ENCODE measurements at regions of chr13 and their contacts with region 1.

Region 1: GRCh38 chr13:99501184-99501847 is at the start of gene TM9SF2:
- DNase-seq: peak; percentile 94 to 98 (median 96)
- ATAC-seq: peak; percentile 70
- H3K4me3 ChIP-seq: peak within 1 kb of the TSS; percentile 93
- H3K4me3 Mint-ChIP-seq: peak within 1 kb of the TSS; percentile 94 to 100 (median 97)
- H3K27ac ChIP-seq: peak within 1 kb of the TSS; percentile 94
- H3K27ac Mint-ChIP-seq: peak within 1 kb of the TSS; percentile 96 to 99 (median 98)
- H3K4me1 ChIP-seq: peaks cover 47 to 65% of the 10 kb centered on the region in 2 donors
- H3K4me1 Mint-ChIP-seq: peaks cover 57 to 93% (median 85%) of the 10 kb centered on the region in 7 donors
- H3K27me3 ChIP-seq: no peaks in the 10 kb centered on the region
- H3K27me3 Mint-ChIP-seq: peaks cover 0 to 4% (median 0%) of the 10 kb centered on the region in 5 donors
- total RNA-seq, gene TM9SF2: 38.0 to 76.3 (median 53.1) TPM

Region 2: DNA sequence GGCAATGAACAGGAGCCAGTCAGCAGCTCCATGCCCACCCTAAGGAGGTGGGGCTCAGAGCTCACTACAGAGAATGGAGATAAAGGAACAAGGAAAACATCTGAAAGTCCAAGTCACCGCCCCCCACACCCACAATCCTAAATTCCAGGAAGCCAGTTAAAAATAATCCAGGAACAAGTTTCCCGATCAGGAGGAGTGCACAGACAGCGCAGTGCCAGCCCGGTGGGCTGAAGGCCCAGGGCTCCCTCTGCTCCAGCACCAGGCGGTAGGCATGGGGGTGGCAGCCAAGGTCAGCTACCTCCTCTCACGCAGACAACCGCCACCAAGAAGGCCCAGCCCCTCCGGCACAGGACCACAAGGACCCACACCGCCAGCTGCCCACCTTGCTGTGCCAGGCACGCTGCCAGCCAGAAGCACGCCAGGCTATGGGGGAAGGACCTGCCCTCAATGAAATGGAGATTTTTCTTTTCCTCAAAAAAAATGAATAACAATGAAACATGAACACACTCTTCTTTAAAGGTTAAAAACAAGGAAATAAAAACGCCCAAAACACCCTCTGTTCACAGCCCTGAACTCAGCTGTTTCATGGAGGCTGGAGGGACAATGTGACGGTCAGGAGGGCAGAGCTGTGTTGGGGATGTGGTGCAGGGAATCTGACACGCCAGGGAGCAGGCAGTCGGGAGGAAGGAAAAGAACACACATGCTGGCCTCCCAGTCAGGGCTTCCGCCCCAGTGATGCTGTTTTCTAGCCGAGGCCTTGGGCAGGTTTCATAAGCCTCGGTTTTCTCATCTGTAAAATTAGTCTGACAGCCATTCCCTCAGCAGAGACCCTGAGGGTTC is 935.4 kb before region 1 on chr13:
- CTCF ChIA-PET with region 1: no interaction called
- POLR2A ChIA-PET with region 1: interaction called, 3 read pairs
- intact Hi-C with region 1: loop called in 1 of 2 experiments (anchors 2 kb)
- DNase-seq: no peak
- ATAC-seq: no peak
- H3K4me3 ChIP-seq: no peak overlapping the region
- H3K4me3 Mint-ChIP-seq: peak overlapping the region; percentile 77 to 99 (median 84)
- H3K27ac ChIP-seq: peak overlapping the region; percentile 69
- H3K27ac Mint-ChIP-seq: peak overlapping the region; percentile 84 to 97 (median 96)
- H3K4me1 ChIP-seq: peaks cover 50 to 87% of the 10 kb centered on the region in 2 donors
- H3K4me1 Mint-ChIP-seq: peaks cover 67 to 99% (median 93%) of the 10 kb centered on the region in 7 donors
- H3K27me3 ChIP-seq: no peaks in the 10 kb centered on the region
- H3K27me3 Mint-ChIP-seq: no peaks in the 10 kb centered on the region

Region 3: GRCh38 chr13:99258210-99258860 is 243.0 kb before region 1 on chr13 and contains the start of gene GPR18:
- CTCF ChIA-PET with region 1: no interaction called
- POLR2A ChIA-PET with region 1: interaction called, 3 read pairs
- intact Hi-C with region 1: loop called (anchors 1 to 2 kb)
- DNase-seq: peak in 7 of 9 donors; percentile 56 to 81 (median 70)
- ATAC-seq: peak; percentile 89
- H3K4me3 ChIP-seq: peak within 1 kb of the TSS; percentile 86
- H3K4me3 Mint-ChIP-seq: peak within 1 kb of the TSS; percentile 86 to 99 (median 94)
- H3K27ac ChIP-seq: peak within 1 kb of the TSS; percentile 81
- H3K27ac Mint-ChIP-seq: peak within 1 kb of the TSS; percentile 90 to 97 (median 95)
- H3K4me1 ChIP-seq: peaks cover 27 to 40% of the 10 kb centered on the region in 2 donors
- H3K4me1 Mint-ChIP-seq: peaks cover 30 to 80% (median 66%) of the 10 kb centered on the region in 7 donors
- H3K27me3 ChIP-seq: no peaks in the 10 kb centered on the region
- H3K27me3 Mint-ChIP-seq: no peaks in the 10 kb centered on the region
- total RNA-seq, gene GPR18: 11.5 to 40.4 (median 21.1) TPM

Region 4: GRCh38 chr13:99356158-99357091 is 144.9 kb before region 1 on chr13:
- CTCF ChIA-PET with region 1: no interaction called
- POLR2A ChIA-PET with region 1: interaction called, 4 read pairs
- intact Hi-C with region 1: loop called in 1 of 2 experiments (anchors 2 kb)
- DNase-seq: peak in 8 of 9 donors; percentile 58 to 94 (median 92)
- ATAC-seq: peak; percentile 77
- H3K4me3 ChIP-seq: peak overlapping the region; percentile 25
- H3K4me3 Mint-ChIP-seq: peak overlapping the region; percentile 66 to 86 (median 78)
- H3K27ac ChIP-seq: peak overlapping the region; percentile 95
- H3K27ac Mint-ChIP-seq: peak overlapping the region; percentile 97 to 100 (median 99)
- H3K4me1 ChIP-seq: peaks cover 95 to 97% of the 10 kb centered on the region in 2 donors
- H3K4me1 Mint-ChIP-seq: peaks cover 78 to 100% (median 100%) of the 10 kb centered on the region in 7 donors
- H3K27me3 ChIP-seq: no peaks in the 10 kb centered on the region
- H3K27me3 Mint-ChIP-seq: no peaks in the 10 kb centered on the region

Region 5: DNA sequence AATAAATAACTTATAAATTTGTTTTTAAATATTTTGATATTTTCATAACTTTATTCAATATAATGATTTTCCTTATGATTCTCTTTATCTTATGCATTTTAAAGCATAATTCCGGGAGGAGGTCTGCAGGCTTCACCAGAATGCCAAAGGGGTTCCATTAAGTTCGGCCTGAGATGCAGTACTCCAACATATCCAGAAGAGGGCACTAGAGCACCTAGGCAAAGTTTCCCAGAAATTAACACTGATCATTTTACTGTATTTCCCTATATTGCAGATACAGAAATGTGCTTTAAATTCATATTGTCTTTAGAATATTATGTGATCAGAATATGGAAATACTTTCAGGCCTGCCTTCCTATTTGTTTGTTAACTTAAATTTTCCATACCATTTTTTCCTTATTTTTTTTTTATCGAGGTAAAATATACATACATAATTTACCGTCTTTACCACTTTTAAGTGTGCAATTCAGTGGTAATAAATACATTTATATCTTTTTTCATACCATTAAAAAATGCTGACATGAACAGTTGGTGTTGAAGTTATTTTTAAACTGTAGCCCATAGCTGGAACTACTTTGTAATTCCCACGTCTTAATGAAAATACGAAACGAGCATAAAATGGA is 58.9 kb before region 1 on chr13:
- CTCF ChIA-PET with region 1: interaction called, 18 read pairs
- POLR2A ChIA-PET with region 1: interaction called, 4 read pairs
- intact Hi-C with region 1: loop called (anchors 1 kb)
- DNase-seq: peak in 7 of 9 donors; percentile 50 to 75 (median 68)
- ATAC-seq: peak; percentile 95
- H3K4me3 ChIP-seq: no peak overlapping the region
- H3K4me3 Mint-ChIP-seq: no peak overlapping the region
- H3K27ac ChIP-seq: no peak overlapping the region
- H3K27ac Mint-ChIP-seq: peak overlapping the region in 1 of 9 donors; percentile 47
- H3K4me1 ChIP-seq: peaks cover 0 to 3% of the 10 kb centered on the region in 2 donors
- H3K4me1 Mint-ChIP-seq: peaks cover 2 to 17% (median 7%) of the 10 kb centered on the region in 7 donors
- H3K27me3 ChIP-seq: no peaks in the 10 kb centered on the region
- H3K27me3 Mint-ChIP-seq: peaks cover 0 to 30% (median 0%) of the 10 kb centered on the region in 5 donors

Region 6: GRCh38 chr13:99980201-99980823 is 479.0 kb after region 1 on chr13:
- CTCF ChIA-PET with region 1: no interaction called
- POLR2A ChIA-PET with region 1: no interaction called
- intact Hi-C with region 1: loop called in 1 of 2 experiments (anchors 5 kb)
- DNase-seq: peak in 6 of 9 donors; percentile 44 to 64 (median 55)
- ATAC-seq: peak; percentile 78
- H3K4me3 ChIP-seq: no peak overlapping the region
- H3K4me3 Mint-ChIP-seq: peak overlapping the region in 4 of 10 donors; percentile 42 to 68 (median 59)
- H3K27ac ChIP-seq: no peak overlapping the region
- H3K27ac Mint-ChIP-seq: no peak overlapping the region
- H3K4me1 ChIP-seq: peaks cover 8 to 18% of the 10 kb centered on the region in 2 donors
- H3K4me1 Mint-ChIP-seq: peaks cover 0 to 35% (median 23%) of the 10 kb centered on the region in 7 donors
- H3K27me3 ChIP-seq: peaks cover 22 to 66% of the 10 kb centered on the region in 2 donors
- H3K27me3 Mint-ChIP-seq: peaks cover 51 to 71% (median 54%) of the 10 kb centered on the region in 5 donors